ENCODE measurements at regions of chr18 and their contacts with region 1.

Region 1: GRCh38 chr18:27378431-27379095 is 193.5 kb upstream of the CHST9 start:
- DNase-seq: no peak
- H3K4me3 Mint-ChIP-seq: no peak overlapping the region
- H3K27ac Mint-ChIP-seq: peak overlapping the region; percentile 78
- H3K4me1 Mint-ChIP-seq: peaks cover 23% of the 10 kb centered on the region
- H3K27me3 Mint-ChIP-seq: no peaks in the 10 kb centered on the region

Region 2: DNA sequence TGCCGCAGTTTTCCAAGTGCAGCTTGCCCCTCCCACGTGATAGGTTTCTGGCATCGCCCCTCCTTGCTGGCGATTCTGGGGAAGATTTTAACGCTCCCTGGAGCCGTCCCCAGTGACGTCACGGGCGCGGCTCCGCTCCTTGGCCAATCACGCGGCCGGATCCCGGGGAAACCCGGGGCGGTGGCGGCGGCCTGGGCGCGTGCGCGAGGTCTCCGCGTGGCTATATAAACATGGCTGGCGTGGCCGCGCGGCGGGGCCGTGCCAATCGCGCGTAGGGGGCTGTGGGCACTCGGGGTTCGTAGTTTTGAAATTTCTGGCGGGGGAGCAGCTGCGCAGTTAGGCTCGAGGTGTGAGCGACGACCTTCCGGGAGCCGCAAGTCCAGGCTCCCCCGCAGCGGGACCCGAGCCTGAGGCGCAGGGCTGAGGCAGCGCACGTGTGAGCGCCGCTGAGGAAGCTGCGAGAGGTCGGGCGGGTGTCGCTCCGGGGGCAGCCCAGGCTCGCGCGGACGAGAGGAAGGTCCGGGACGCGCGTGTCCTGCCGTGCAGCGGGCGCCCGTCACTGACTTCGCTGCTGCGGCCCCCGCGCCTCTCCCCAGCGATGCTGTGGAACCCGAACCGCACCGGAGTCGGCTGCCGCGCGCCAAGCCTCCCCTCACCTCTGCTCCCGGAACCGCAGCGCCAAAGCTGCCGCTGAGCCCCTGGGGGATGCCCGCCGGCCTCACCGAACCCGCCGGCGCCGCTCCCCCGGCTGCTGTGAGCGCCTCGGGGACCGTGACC is 1152.1 kb before region 1 on chr18 and contains the start of gene TAF4B:
- intact Hi-C with region 1: loop called (anchors 10 kb)
- DNase-seq: peak; percentile 91
- H3K4me3 Mint-ChIP-seq: peak within 1 kb of the TSS; percentile 94
- H3K27ac Mint-ChIP-seq: peak within 1 kb of the TSS; percentile 95
- H3K4me1 Mint-ChIP-seq: peaks cover 25% of the 10 kb centered on the region
- H3K27me3 Mint-ChIP-seq: peaks cover 7% of the 10 kb centered on the region
- total RNA-seq, gene TAF4B: 14.9 and 16.1 TPM in 2 replicates

Region 3: GRCh38 chr18:26710470-26711096 is 668.0 kb before region 1 on chr18:
- intact Hi-C with region 1: loop called (anchors 5 kb)
- DNase-seq: peak; percentile 52
- H3K4me3 Mint-ChIP-seq: peak overlapping the region; percentile 19
- H3K27ac Mint-ChIP-seq: no peak overlapping the region
- H3K4me1 Mint-ChIP-seq: peaks cover 48% of the 10 kb centered on the region
- H3K27me3 Mint-ChIP-seq: peaks cover 7% of the 10 kb centered on the region

Region 4: GRCh38 chr18:27349284-27349882 is 29.2 kb before region 1 on chr18:
- intact Hi-C with region 1: no loop called
- DNase-seq: no peak
- H3K4me3 Mint-ChIP-seq: no peak overlapping the region
- H3K27ac Mint-ChIP-seq: no peak overlapping the region
- H3K4me1 Mint-ChIP-seq: no peaks in the 10 kb centered on the region
- H3K27me3 Mint-ChIP-seq: no peaks in the 10 kb centered on the region

Region 5: GRCh38 chr18:27413495-27414401 is 35.2 kb after region 1 on chr18:
- intact Hi-C with region 1: loop called (anchors 5 kb)
- DNase-seq: no peak
- H3K4me3 Mint-ChIP-seq: no peak overlapping the region
- H3K27ac Mint-ChIP-seq: no peak overlapping the region
- H3K4me1 Mint-ChIP-seq: no peaks in the 10 kb centered on the region
- H3K27me3 Mint-ChIP-seq: no peaks in the 10 kb centered on the region

Region 6: DNA sequence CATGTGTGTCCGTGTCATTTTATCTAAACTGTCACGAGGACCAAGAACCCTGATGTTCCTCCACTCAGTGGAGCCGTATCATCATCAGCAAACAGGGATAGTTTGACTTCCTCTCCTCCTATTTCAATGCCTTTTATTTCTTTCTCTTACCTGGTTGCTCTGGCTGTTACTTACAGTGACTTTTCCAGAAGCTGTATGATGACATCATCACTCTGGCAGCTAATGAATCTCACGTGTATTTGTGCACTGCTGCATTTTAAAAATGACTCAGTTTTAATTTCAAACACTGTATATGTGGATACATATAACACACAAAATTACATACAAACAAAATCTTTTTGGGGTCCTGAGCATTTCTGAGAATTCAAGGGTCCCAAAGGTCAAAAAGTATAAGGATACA is 316.9 kb after region 1 on chr18:
- intact Hi-C with region 1: no loop called
- DNase-seq: no peak
- H3K4me3 Mint-ChIP-seq: no peak overlapping the region
- H3K27ac Mint-ChIP-seq: no peak overlapping the region
- H3K4me1 Mint-ChIP-seq: no peaks in the 10 kb centered on the region
- H3K27me3 Mint-ChIP-seq: no peaks in the 10 kb centered on the region

Region 7: DNA sequence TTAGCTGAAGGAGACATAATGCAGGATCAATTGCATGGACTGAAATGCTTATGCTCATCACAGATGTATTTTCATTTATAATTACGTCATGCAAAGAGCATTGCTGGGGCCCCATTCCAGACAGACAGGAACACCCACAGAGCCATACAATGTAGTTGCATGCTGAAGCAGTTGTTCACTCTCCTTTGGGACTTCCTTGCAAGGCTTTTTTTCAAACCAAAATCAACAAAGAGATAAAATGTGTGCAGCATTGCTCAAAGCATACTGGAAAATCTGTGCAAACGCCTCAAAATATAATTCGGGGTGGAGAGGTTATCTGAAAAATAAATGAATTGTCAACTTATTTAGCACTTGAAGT is 335.2 kb after region 1 on chr18:
- intact Hi-C with region 1: no loop called
- DNase-seq: no peak
- H3K4me3 Mint-ChIP-seq: no peak overlapping the region
- H3K27ac Mint-ChIP-seq: no peak overlapping the region
- H3K4me1 Mint-ChIP-seq: no peaks in the 10 kb centered on the region
- H3K27me3 Mint-ChIP-seq: no peaks in the 10 kb centered on the region